Activated T-helper 2 cell treated with anti-CD3 and anti-CD28 coated beads, Interferon-gamma antibody, Interleukin-2, Interleukin-4, amounts not matched to agents 10 μg/mL and 5 μg/mL and 100 μg/mL, durations not matched to agents 14 hours and 24 hours and 36 hours (primary cell): ENCODE measurements at regions of chr1 and their contacts with region 1.

Region 1: DNA sequence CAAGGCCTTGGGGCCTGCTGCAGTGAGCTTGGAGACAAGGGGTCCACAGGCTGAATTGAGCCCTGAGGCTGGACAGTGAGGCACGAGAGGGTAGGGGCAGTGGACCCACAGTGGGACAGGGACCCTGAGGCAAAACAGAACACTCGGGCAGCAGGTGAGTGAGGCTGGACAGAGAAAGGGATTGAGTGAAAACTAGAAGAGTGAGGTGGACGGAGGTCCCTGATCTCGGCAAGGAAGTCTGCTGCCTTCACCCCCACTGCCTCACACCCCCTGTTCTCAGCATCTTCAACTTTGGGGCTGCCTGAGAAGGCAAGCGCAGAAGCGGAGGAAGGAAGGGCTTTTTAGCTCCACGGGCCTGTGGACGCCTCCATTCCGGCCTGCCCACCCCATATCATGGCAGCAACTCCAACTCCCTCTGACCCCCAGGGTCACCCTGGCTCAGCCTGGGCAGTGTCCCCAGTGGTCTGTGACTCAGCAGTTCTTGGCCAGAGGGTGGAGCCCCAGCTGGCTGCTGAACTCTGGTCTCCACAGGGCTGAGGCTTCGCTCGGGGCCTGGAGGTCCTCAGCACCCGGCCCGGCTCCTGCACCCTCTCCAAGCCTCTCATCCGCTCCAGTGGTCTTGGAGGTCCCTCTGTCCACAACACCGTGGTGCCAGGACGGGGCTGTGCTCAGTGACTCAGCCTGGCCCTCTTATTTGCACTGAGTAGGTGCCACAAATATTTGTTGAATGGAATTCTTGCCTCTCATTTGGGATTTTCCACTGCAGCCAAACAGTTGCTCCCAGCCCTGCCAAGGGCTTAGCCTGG is 60.0 kb upstream of the EPS8L3 start:
- DNase-seq: no peak
- H3K4me3 Mint-ChIP-seq: no peak overlapping the region
- H3K27ac Mint-ChIP-seq: peak overlapping the region; percentile 84
- H3K4me1 Mint-ChIP-seq: peaks cover 67% of the 10 kb centered on the region
- H3K27me3 Mint-ChIP-seq: no peaks in the 10 kb centered on the region

Region 2: DNA sequence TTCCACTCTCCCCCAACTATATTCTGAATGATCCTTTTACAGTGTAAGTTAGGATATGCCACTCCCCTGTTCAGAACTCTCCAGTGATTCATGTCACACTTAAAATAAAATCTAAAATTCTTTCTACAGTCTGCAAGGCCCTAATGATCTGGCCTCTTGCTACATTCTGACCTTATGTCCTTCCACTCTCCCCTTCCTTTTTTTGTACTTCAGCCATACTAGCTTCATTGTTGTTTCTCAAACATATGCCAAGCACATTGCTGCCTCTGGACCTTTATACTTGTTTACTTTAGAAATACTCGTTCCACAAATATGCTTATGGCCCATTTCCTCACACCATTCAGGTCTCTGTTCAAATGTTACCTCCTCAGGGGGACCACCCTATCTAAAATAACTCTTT is 382.7 kb before region 1 on chr1:
- intact Hi-C with region 1: no loop called
- DNase-seq: no peak
- H3K4me3 Mint-ChIP-seq: no peak overlapping the region
- H3K27ac Mint-ChIP-seq: no peak overlapping the region
- H3K4me1 Mint-ChIP-seq: no peaks in the 10 kb centered on the region
- H3K27me3 Mint-ChIP-seq: peaks cover 8% of the 10 kb centered on the region

Region 3: GRCh38 chr1:109667452-109668122 is 156.2 kb before region 1 on chr1 and contains the start of gene GSTM2:
- intact Hi-C with region 1: no loop called
- DNase-seq: peak; percentile 82
- H3K4me3 Mint-ChIP-seq: peak within 1 kb of the TSS; percentile 70
- H3K27ac Mint-ChIP-seq: peak within 1 kb of the TSS; percentile 29
- H3K4me1 Mint-ChIP-seq: peaks cover 24% of the 10 kb centered on the region
- H3K27me3 Mint-ChIP-seq: no peaks in the 10 kb centered on the region
- total RNA-seq, gene GSTM2: 30.1 and 32.3 TPM in 2 replicates

Region 4: GRCh38 chr1:109807822-109808680 is 15.7 kb before region 1 on chr1:
- intact Hi-C with region 1: no loop called
- DNase-seq: no peak
- H3K4me3 Mint-ChIP-seq: no peak overlapping the region
- H3K27ac Mint-ChIP-seq: peak overlapping the region; percentile 8
- H3K4me1 Mint-ChIP-seq: peaks cover 41% of the 10 kb centered on the region
- H3K27me3 Mint-ChIP-seq: no peaks in the 10 kb centered on the region

Region 5: DNA sequence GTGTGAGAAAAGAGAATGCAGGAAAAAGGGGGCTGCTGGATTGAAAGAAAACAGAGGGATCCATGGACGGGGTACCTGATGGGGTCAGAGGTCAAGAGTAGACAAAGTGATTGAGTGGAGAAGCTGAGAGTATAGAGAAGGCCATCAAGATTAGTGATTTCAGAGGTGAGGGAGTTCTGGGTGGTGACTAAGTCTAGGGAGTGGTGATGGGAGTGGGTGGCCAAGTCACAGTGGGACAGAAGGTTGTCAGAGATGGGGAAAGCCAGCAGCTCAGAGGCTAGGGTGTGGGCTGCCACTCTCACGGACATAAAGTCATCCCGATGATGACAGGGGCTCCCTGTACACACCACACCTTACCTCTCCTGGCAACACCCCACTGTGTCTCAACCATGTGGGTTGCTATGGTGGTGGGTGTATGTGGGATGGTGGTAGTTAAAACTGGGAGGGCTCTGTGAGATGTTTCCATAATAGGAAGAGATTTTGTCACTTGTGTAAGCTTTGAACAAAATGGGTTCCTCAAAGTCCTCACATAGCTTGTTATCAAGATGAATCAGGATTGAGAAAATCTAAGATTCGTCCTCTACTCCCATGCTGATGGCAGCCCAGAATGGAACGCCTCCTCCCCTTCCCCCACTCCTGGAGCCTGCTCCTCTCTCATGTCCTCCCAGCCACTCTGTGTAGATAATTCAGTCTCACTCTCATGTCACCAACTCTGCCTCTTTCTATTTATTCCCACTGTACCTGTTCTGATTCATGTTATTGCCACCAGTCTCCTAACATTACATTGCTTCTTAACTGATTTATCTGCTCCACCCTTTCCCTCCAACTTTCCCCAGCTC is 66.6 kb after region 1 on chr1:
- intact Hi-C with region 1: loop called (anchors 1 kb)
- DNase-seq: no peak
- H3K4me3 Mint-ChIP-seq: peak overlapping the region; percentile 18
- H3K27ac Mint-ChIP-seq: peak overlapping the region; percentile 94
- H3K4me1 Mint-ChIP-seq: peaks cover 39% of the 10 kb centered on the region
- H3K27me3 Mint-ChIP-seq: no peaks in the 10 kb centered on the region